Heart right ventricle (tissue), 16 donors: ENCODE measurements at regions of chr10 and their contacts with region 1.

Region 1: GRCh38 chr10:98090822-98091221 is 43.6 kb upstream of the R3HCC1L start:
- DNase-seq: no peak
- ATAC-seq: no peak
- H3K4me3 ChIP-seq: no peak overlapping the region
- H3K27ac ChIP-seq: no peak overlapping the region
- H3K4me1 ChIP-seq: peaks cover 0 to 10% (median 0%) of the 10 kb centered on the region in 9 donors
- H3K27me3 ChIP-seq: peaks cover 0 to 58% (median 12%) of the 10 kb centered on the region in 7 donors
- CTCF ChIP-seq: no peak

Region 2: DNA sequence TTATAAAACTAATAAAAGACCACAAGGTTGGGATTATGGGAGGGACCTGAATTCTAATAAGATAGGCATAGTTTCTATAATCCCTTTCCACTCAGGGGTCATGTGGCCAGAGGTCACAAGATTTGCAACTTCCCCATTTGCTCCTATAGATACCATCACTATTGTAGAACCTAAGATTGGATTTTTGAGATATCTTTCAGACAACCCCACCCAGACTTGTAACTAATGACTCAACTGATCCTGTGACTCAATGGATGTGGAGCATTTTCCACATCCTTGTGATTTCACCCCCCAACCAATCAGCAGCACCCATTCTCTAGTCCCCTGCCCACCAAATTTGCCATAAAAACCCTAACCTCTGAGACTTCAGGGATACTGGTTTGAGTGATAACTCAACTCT is 1318.6 kb before region 1 on chr10:
- intact Hi-C with region 1: loop called in 1 of 10 experiments (anchors 5 kb)
- DNase-seq: no peak
- ATAC-seq: no peak
- H3K4me3 ChIP-seq: no peak overlapping the region
- H3K27ac ChIP-seq: no peak overlapping the region
- H3K4me1 ChIP-seq: no peaks in the 10 kb centered on the region
- H3K27me3 ChIP-seq: peaks cover 0 to 3% (median 0%) of the 10 kb centered on the region in 7 donors
- CTCF ChIP-seq: no peak